ENCODE measurements at regions of chr16 and their contacts with region 1.

Region 1: GRCh38 chr16:10181196-10182162 is 749 bp downstream of the GRIN2A start:
- DNase-seq: peak; percentile 84
- H3K4me3 ChIP-seq: peak overlapping the region in 7 of 8 donors; percentile 9 to 64 (median 22)
- H3K27ac ChIP-seq: no peak overlapping the region
- H3K4me1 ChIP-seq: peaks cover 16 to 30% (median 27%) of the 10 kb centered on the region in 6 donors
- H3K27me3 ChIP-seq: peaks cover 8 to 82% (median 44%) of the 10 kb centered on the region in 7 donors
- CTCF ChIP-seq: peak; percentile 36 to 85 (median 74)
- POLR2A ChIP-seq: no peak

Region 2: GRCh38 chr16:9134739-9135138 is 1046.7 kb before region 1 on chr16:
- intact Hi-C with region 1: loop called (anchors 10 kb)
- DNase-seq: peak; percentile 87
- H3K4me3 ChIP-seq: no peak overlapping the region
- H3K27ac ChIP-seq: no peak overlapping the region
- H3K4me1 ChIP-seq: peaks cover 8 to 48% (median 26%) of the 10 kb centered on the region in 6 donors
- H3K27me3 ChIP-seq: no peaks in the 10 kb centered on the region
- CTCF ChIP-seq: peak; percentile 25 to 75 (median 58)
- POLR2A ChIP-seq: no peak

Region 3: DNA sequence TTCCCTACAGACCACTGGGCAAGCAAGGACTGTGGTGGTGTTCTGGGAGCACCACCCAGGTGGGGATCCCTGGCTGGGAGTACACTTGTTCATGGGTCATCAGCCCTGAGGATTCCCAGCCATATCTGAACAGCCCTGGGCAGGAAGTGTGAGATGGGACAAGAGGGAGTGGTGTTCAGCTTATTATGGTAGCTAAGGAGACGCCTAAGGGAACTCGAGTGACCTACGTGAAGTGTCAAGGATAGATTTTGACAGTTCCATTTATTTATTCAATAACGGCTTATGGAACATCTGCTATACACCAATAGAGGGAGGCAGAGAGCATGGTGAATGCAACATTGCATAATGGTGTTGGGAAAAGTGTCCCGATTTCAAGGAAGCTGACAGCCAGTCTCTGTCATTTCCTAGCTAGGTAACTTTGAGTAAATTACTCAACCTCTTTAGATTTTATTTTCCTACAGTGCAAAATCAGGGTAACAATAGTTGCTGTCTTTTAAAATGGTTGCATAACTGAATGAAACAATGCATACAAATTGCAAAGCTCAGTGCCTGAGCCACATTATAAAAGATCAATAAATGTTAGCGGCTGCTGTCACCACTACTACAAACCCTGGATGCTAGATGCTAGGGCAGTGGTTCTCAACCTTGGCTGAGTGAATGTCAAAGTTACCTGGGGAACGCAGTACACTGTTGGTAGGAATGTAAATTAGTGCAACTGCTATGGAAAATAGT is 533.3 kb before region 1 on chr16:
- intact Hi-C with region 1: loop called (anchors 10 kb)
- DNase-seq: no peak
- H3K4me3 ChIP-seq: no peak overlapping the region
- H3K27ac ChIP-seq: no peak overlapping the region
- H3K4me1 ChIP-seq: no peaks in the 10 kb centered on the region
- H3K27me3 ChIP-seq: peaks cover 0 to 13% (median 0%) of the 10 kb centered on the region in 7 donors
- CTCF ChIP-seq: peak in 7 of 11 experiments; percentile 19 to 40 (median 30)
- POLR2A ChIP-seq: no peak